ENCODE measurements at regions of chr2 and their contacts with region 1.

Region 1: GRCh38 chr2:26345545-26346453 is at the start of gene SELENOI:
- DNase-seq: peak; percentile 98 to 99 (median 98)
- H3K4me3 ChIP-seq: peak within 1 kb of the TSS; percentile 74 to 91 (median 78)
- H3K4me3 Mint-ChIP-seq: peak within 1 kb of the TSS; percentile 98 to 100
- H3K27ac ChIP-seq: peak within 1 kb of the TSS; percentile 85 to 90
- H3K27ac Mint-ChIP-seq: peak within 1 kb of the TSS; percentile 94 to 100 (median 99)
- H3K4me1 ChIP-seq: peaks cover 18 to 23% of the 10 kb centered on the region in 2 donors
- H3K4me1 Mint-ChIP-seq: peaks cover 28% of the 10 kb centered on the region
- H3K27me3 ChIP-seq: no peaks in the 10 kb centered on the region
- H3K27me3 Mint-ChIP-seq: no peaks in the 10 kb centered on the region
- CTCF ChIP-seq: no peak
- polyA plus RNA-seq, gene SELENOI: 2.3 to 3.2 (median 2.5) TPM

Region 2: GRCh38 chr2:26244309-26245121 is 101.3 kb before region 1 on chr2 and contains the starts of genes HADHA and HADHB:
- intact Hi-C with region 1: loop called (anchors 2 to 5 kb)
- DNase-seq: peak; percentile 80 to 84 (median 83)
- H3K4me3 ChIP-seq: peak within 1 kb of the TSS; percentile 76 to 97 (median 79)
- H3K4me3 Mint-ChIP-seq: peak within 1 kb of the TSS; percentile 98 to 99
- H3K27ac ChIP-seq: peak within 1 kb of the TSS; percentile 97 to 98
- H3K27ac Mint-ChIP-seq: peak within 1 kb of the TSS; percentile 98 to 100 (median 100)
- H3K4me1 ChIP-seq: peaks cover 47 to 63% of the 10 kb centered on the region in 2 donors
- H3K4me1 Mint-ChIP-seq: peaks cover 62% of the 10 kb centered on the region
- H3K27me3 ChIP-seq: no peaks in the 10 kb centered on the region
- H3K27me3 Mint-ChIP-seq: no peaks in the 10 kb centered on the region
- CTCF ChIP-seq: no peak
- polyA plus RNA-seq, gene HADHA: 60.2 to 187 (median 155) TPM
- polyA plus RNA-seq, gene HADHB: 94.3 to 200 (median 186) TPM

Region 3: GRCh38 chr2:26561918-26562810 is 216.4 kb after region 1 on chr2:
- intact Hi-C with region 1: no loop called
- DNase-seq: no peak
- H3K4me3 ChIP-seq: peak overlapping the region in 1 of 3 experiments; percentile 39
- H3K4me3 Mint-ChIP-seq: peak overlapping the region; percentile 39 to 86
- H3K27ac ChIP-seq: no peak overlapping the region
- H3K27ac Mint-ChIP-seq: no peak overlapping the region
- H3K4me1 ChIP-seq: peaks cover 7 to 12% of the 10 kb centered on the region in 2 donors
- H3K4me1 Mint-ChIP-seq: peaks cover 10% of the 10 kb centered on the region
- H3K27me3 ChIP-seq: peaks cover 14 to 72% of the 10 kb centered on the region in 2 donors
- H3K27me3 Mint-ChIP-seq: peaks cover 66 to 82% (median 67%) of the 10 kb centered on the region in 3 donors
- CTCF ChIP-seq: no peak

Region 4: GRCh38 chr2:26612522-26613240 is 266.9 kb after region 1 on chr2:
- intact Hi-C with region 1: no loop called
- DNase-seq: peak; percentile 5 to 26 (median 5)
- H3K4me3 ChIP-seq: no peak overlapping the region
- H3K4me3 Mint-ChIP-seq: no peak overlapping the region
- H3K27ac ChIP-seq: no peak overlapping the region
- H3K27ac Mint-ChIP-seq: peak overlapping the region in 2 of 7 donors; percentile 50 to 78
- H3K4me1 ChIP-seq: peaks cover 0 to 8% of the 10 kb centered on the region in 2 donors
- H3K4me1 Mint-ChIP-seq: peaks cover 5% of the 10 kb centered on the region
- H3K27me3 ChIP-seq: no peaks in the 10 kb centered on the region
- H3K27me3 Mint-ChIP-seq: peaks cover 3 to 7% (median 4%) of the 10 kb centered on the region in 3 donors
- CTCF ChIP-seq: no peak

Region 5: GRCh38 chr2:26764078-26764887 is 418.5 kb after region 1 on chr2 and contains the start of gene SLC35F6:
- intact Hi-C with region 1: loop called in 1 of 2 experiments (anchors 10 kb)
- DNase-seq: peak; percentile 77 to 81 (median 78)
- H3K4me3 ChIP-seq: peak within 1 kb of the TSS; percentile 66 to 98 (median 94)
- H3K4me3 Mint-ChIP-seq: peak within 1 kb of the TSS; percentile 97 to 99
- H3K27ac ChIP-seq: peak within 1 kb of the TSS; percentile 75 to 91
- H3K27ac Mint-ChIP-seq: peak within 1 kb of the TSS; percentile 88 to 96 (median 94)
- H3K4me1 ChIP-seq: peaks cover 51 to 53% of the 10 kb centered on the region in 2 donors
- H3K4me1 Mint-ChIP-seq: peaks cover 49% of the 10 kb centered on the region
- H3K27me3 ChIP-seq: peaks cover 0 to 5% of the 10 kb centered on the region in 2 donors
- H3K27me3 Mint-ChIP-seq: peaks cover 1 to 15% (median 8%) of the 10 kb centered on the region in 3 donors
- CTCF ChIP-seq: no peak
- polyA plus RNA-seq, gene SLC35F6: 11.3 to 22.2 (median 15.1) TPM

Measured in CD14-positive monocyte (primary cell).